Testis (tissue), 5 donors: ENCODE measurements at regions of chr17 and their contacts with region 1.

Region 1: GRCh38 chr17:68101075-68101992 is 65.8 kb downstream of the KPNA2 start:
- DNase-seq: peak; percentile 97
- H3K4me3 ChIP-seq: peak overlapping the region; percentile 84 to 87
- H3K27ac ChIP-seq: peak overlapping the region; percentile 78 to 94
- H3K4me1 ChIP-seq: peaks cover 11% of the 10 kb centered on the region
- H3K27me3 ChIP-seq: no peaks in the 10 kb centered on the region
- CTCF ChIP-seq: no peak
- POLR2A ChIP-seq: peak; percentile 25

Region 2: GRCh38 chr17:68057531-68057952 is 43.8 kb before region 1 on chr17:
- intact Hi-C with region 1: loop called (anchors 10 kb)
- DNase-seq: no peak
- H3K4me3 ChIP-seq: no peak overlapping the region
- H3K27ac ChIP-seq: no peak overlapping the region
- H3K4me1 ChIP-seq: peaks cover 9% of the 10 kb centered on the region
- H3K27me3 ChIP-seq: no peaks in the 10 kb centered on the region
- CTCF ChIP-seq: peak in 1 of 3 experiments; percentile 31
- POLR2A ChIP-seq: no peak

Region 3: GRCh38 chr17:68184816-68185436 is 83.6 kb after region 1 on chr17:
- intact Hi-C with region 1: no loop called
- DNase-seq: no peak
- H3K4me3 ChIP-seq: no peak overlapping the region
- H3K27ac ChIP-seq: no peak overlapping the region
- H3K4me1 ChIP-seq: no peaks in the 10 kb centered on the region
- H3K27me3 ChIP-seq: no peaks in the 10 kb centered on the region
- CTCF ChIP-seq: no peak
- POLR2A ChIP-seq: no peak